Head of caudate nucleus (tissue), 42 donors: ENCODE measurements at regions of chr15 and their contacts with region 1.

Region 1: GRCh38 chr15:94168247-94168646 is 63.1 kb upstream of the MCTP2 start:
- DNase-seq: no peak

Region 2: GRCh38 chr15:93852761-93853160 is 315.5 kb before region 1 on chr15:
- intact Hi-C with region 1: no loop called
- DNase-seq: no peak

Region 3: DNA sequence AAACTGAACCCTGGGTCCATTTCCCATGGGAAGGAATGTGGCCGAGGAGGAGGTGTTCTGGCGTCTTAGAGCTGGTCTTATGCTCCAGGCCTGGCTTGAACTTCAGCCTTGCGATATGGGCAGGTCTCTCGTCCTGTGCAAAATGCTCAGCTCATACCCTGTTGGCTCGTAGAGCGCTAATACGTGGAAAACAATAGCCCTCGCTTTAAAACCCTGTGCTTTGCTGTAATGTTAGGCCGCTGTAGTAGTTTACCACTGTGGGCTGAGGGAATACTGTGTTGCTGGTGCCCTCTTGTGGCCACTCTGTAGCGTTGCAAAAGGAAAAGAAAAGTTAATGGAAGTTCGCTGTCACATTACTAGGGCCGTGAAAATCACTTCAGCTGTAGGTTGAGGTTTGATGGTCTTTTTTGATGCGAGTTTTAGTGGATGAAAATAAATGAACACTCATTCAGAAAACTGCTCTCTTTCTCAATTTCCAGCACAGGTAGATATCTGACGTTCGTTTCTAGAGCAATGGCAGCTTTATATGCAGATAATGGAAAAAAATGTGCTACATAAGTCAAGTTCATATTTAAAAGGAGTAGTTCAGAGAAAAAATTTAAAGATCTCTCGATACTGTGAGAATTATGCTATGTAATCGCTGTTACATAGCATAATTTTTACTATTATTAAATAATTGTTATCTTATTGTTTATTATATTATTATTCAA is 156.0 kb after region 1 on chr15:
- intact Hi-C with region 1: loop called (anchors 5 kb)
- DNase-seq: peak in 37 of 42 donors; percentile 4 to 81 (median 53)